ENCODE measurements at regions of chr12 and their contacts with region 1.

Region 1: GRCh38 chr12:110937104-110937641 is 16.8 kb upstream of the MYL2 start:
- DNase-seq: peak; percentile 17 to 76 (median 60)
- ATAC-seq: peak; percentile 40
- H3K4me3 ChIP-seq: no peak overlapping the region
- H3K4me3 Mint-ChIP-seq: no peak overlapping the region
- H3K27ac ChIP-seq: no peak overlapping the region
- H3K27ac Mint-ChIP-seq: no peak overlapping the region
- H3K4me1 ChIP-seq: peaks cover 4% of the 10 kb centered on the region
- H3K4me1 Mint-ChIP-seq: peaks cover 5% of the 10 kb centered on the region
- H3K27me3 ChIP-seq: no peaks in the 10 kb centered on the region
- H3K27me3 Mint-ChIP-seq: peaks cover 28% of the 10 kb centered on the region
- CTCF ChIP-seq: peak; percentile 98

Region 2: DNA sequence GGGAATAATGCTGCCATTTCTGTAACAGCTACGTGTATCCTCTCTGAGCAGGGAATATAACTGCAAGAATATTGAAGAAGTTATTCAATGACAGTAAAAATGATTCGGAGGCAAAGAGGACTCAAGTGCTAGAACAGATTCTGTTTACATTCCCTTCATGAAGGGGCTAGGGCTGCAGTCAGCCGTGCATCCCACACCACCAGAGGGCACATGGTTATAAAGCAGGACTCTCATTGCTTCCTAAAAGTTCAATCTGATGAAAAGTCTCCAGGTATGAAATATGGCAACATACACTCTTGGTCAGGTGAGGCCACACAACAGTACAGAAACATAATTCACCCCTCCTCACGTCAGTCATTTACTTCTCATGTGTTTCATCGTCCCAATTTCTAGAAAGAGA is 1003.1 kb before region 1 on chr12:
- CTCF ChIA-PET with region 1: no interaction called
- POLR2A ChIA-PET with region 1: no interaction called
- intact Hi-C with region 1: no loop called
- DNase-seq: no peak
- ATAC-seq: no peak
- H3K4me3 ChIP-seq: no peak overlapping the region
- H3K4me3 Mint-ChIP-seq: no peak overlapping the region
- H3K27ac ChIP-seq: no peak overlapping the region
- H3K27ac Mint-ChIP-seq: no peak overlapping the region
- H3K4me1 ChIP-seq: no peaks in the 10 kb centered on the region
- H3K4me1 Mint-ChIP-seq: no peaks in the 10 kb centered on the region
- H3K27me3 ChIP-seq: no peaks in the 10 kb centered on the region
- H3K27me3 Mint-ChIP-seq: no peaks in the 10 kb centered on the region
- CTCF ChIP-seq: no peak

Region 3: GRCh38 chr12:111174251-111174960 is 237.2 kb after region 1 on chr12:
- CTCF ChIA-PET with region 1: interaction called, 4 read pairs
- POLR2A ChIA-PET with region 1: no interaction called
- intact Hi-C with region 1: loop called in 1 of 2 experiments (anchors 5 kb)
- DNase-seq: peak in 2 of 9 experiments; percentile 13 to 18
- ATAC-seq: no peak
- H3K4me3 ChIP-seq: no peak overlapping the region
- H3K4me3 Mint-ChIP-seq: no peak overlapping the region
- H3K27ac ChIP-seq: no peak overlapping the region
- H3K27ac Mint-ChIP-seq: no peak overlapping the region
- H3K4me1 ChIP-seq: no peaks in the 10 kb centered on the region
- H3K4me1 Mint-ChIP-seq: no peaks in the 10 kb centered on the region
- H3K27me3 ChIP-seq: no peaks in the 10 kb centered on the region
- H3K27me3 Mint-ChIP-seq: peaks cover 32% of the 10 kb centered on the region
- CTCF ChIP-seq: no peak

Region 4: DNA sequence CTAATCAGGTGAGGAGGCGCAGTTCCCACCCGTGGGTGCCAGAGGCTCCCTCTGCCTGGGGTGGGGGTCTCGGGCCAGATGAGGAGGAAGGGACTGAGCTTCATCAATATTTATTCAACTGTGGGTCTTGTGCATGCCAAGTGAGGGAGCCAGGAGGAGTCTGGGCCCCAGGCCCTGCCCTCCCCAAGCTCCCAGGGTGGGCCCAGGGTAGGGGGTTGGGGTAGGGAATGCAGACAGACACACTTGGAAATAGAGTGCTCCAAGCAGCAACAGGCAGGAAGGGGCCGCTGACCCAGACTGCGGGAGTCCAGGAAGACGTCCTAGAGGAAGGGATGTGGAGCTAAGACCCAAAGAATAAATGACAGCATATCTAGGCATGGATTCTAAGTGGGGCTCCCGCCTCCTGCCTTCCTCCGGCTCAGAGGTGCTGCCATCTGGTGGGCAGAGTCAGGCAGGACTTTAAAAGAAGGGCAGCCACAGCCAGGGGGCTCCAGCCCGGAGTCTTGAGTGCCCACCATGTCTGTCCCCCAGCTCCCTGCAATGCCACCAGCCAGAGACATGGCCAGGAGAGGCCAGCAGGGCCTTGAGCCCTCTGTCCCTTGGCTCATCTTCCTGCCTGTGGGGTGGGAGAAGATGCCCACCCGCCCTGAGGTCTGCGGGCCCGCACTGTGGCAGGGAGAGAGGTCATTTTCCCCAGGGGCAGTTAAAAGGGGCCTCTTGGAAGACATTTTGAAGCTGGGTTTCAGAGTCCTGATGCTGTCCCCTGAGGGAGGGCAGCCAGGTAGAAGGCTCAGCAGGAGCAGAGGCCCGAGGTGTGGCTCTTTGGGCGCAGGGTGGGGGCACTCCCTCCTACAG is 361.6 kb after region 1 on chr12:
- CTCF ChIA-PET with region 1: interaction called, 18 read pairs
- POLR2A ChIA-PET with region 1: no interaction called
- intact Hi-C with region 1: loop called (anchors 1 kb)
- DNase-seq: peak in 8 of 9 experiments; percentile 26 to 65 (median 46)
- ATAC-seq: peak; percentile 34
- H3K4me3 ChIP-seq: no peak overlapping the region
- H3K4me3 Mint-ChIP-seq: no peak overlapping the region
- H3K27ac ChIP-seq: no peak overlapping the region
- H3K27ac Mint-ChIP-seq: no peak overlapping the region
- H3K4me1 ChIP-seq: no peaks in the 10 kb centered on the region
- H3K4me1 Mint-ChIP-seq: no peaks in the 10 kb centered on the region
- H3K27me3 ChIP-seq: no peaks in the 10 kb centered on the region
- H3K27me3 Mint-ChIP-seq: peaks cover 6% of the 10 kb centered on the region
- CTCF ChIP-seq: peak; percentile 48

Region 5: GRCh38 chr12:111313833-111314259 is 376.7 kb after region 1 on chr12:
- CTCF ChIA-PET with region 1: interaction called, 34 read pairs
- POLR2A ChIA-PET with region 1: no interaction called
- intact Hi-C with region 1: loop called in 1 of 2 experiments (anchors 1 kb)
- DNase-seq: peak; percentile 36 to 85 (median 72)
- ATAC-seq: peak; percentile 52
- H3K4me3 ChIP-seq: no peak overlapping the region
- H3K4me3 Mint-ChIP-seq: no peak overlapping the region
- H3K27ac ChIP-seq: no peak overlapping the region
- H3K27ac Mint-ChIP-seq: no peak overlapping the region
- H3K4me1 ChIP-seq: peaks cover 12% of the 10 kb centered on the region
- H3K4me1 Mint-ChIP-seq: peaks cover 10% of the 10 kb centered on the region
- H3K27me3 ChIP-seq: peaks cover 3% of the 10 kb centered on the region in 2 experiments
- H3K27me3 Mint-ChIP-seq: peaks cover 19% of the 10 kb centered on the region
- CTCF ChIP-seq: peak; percentile 95